GM12878 (cell line): ENCODE measurements at regions of chr3 and their contacts with region 1.

Region 1: GRCh38 chr3:69716119-69716518 is 23.1 kb upstream of the MITF start:
- DNase-seq: no peak
- ATAC-seq: no peak
- H3K4me3 ChIP-seq: no peak overlapping the region
- H3K27ac ChIP-seq: no peak overlapping the region
- H3K4me1 ChIP-seq: no peaks in the 10 kb centered on the region
- H3K27me3 ChIP-seq: no peaks in the 10 kb centered on the region; a peak in 1 of 4 replicates
- CTCF ChIP-seq: no peak
- EP300 ChIP-seq: no peak
- POLR2A ChIP-seq: no peak
- RAD21 ChIP-seq: no peak

Region 2: GRCh38 chr3:69682878-69683806 is 33.0 kb before region 1 on chr3:
- CTCF ChIA-PET with region 1: no interaction called
- POLR2A ChIA-PET with region 1: no interaction called
- RAD21 ChIA-PET with region 1: no interaction called
- SMC1A ChIA-PET with region 1: no interaction called
- in situ Hi-C with region 1: no loop called
- intact Hi-C with region 1: loop called (anchors 1 kb)
- DNase-seq: no peak
- ATAC-seq: no peak
- H3K4me3 ChIP-seq: no peak overlapping the region
- H3K27ac ChIP-seq: no peak overlapping the region
- H3K4me1 ChIP-seq: no peaks in the 10 kb centered on the region
- H3K27me3 ChIP-seq: no peaks in the 10 kb centered on the region
- CTCF ChIP-seq: no peak
- EP300 ChIP-seq: no peak
- POLR2A ChIP-seq: no peak
- RAD21 ChIP-seq: no peak